ENCODE measurements at regions of chr7 and their contacts with region 1.

Region 1: DNA sequence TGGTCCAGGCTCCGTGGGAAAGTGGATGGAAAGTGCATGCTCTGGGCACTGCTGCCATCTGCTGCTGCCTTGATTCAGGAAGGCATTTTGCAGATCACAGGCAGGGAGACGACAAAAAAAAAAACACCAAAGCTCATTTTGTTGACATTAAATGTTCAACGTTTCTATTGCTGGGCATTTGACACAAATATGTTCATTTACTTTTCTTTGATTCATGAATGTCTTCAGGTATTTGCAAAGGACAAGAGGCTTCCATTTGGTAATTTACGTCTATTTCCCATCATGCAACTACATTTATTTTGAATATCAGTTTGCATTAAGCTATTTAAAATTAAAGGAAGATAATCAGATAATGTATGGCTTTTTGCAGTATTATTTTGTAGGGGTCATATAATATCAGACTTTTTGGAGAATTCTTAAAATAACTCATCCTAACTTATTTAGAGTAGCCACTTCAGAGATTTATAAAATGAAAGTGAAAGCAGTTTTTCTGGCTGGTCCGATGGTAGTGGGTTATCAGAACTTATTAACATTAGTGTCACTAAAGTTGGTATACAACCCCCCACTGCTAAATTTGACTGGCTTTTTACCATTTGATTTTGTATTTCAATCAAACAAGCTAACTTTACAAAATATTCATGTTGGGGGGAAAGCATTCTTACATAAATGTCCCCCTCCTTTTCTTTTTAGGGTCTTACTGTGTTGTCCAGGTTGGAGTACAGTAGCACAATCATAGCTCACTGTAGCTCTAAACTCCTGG is 65.3 kb downstream of the PDIA4 start:
- DNase-seq: peak; percentile 72
- ATAC-seq: peak; percentile 88

Region 2: GRCh38 chr7:148503875-148504487 is 459.0 kb before region 1 on chr7:
- intact Hi-C with region 1: loop called (anchors 5 kb)
- DNase-seq: no peak
- ATAC-seq: no peak

Region 3: DNA sequence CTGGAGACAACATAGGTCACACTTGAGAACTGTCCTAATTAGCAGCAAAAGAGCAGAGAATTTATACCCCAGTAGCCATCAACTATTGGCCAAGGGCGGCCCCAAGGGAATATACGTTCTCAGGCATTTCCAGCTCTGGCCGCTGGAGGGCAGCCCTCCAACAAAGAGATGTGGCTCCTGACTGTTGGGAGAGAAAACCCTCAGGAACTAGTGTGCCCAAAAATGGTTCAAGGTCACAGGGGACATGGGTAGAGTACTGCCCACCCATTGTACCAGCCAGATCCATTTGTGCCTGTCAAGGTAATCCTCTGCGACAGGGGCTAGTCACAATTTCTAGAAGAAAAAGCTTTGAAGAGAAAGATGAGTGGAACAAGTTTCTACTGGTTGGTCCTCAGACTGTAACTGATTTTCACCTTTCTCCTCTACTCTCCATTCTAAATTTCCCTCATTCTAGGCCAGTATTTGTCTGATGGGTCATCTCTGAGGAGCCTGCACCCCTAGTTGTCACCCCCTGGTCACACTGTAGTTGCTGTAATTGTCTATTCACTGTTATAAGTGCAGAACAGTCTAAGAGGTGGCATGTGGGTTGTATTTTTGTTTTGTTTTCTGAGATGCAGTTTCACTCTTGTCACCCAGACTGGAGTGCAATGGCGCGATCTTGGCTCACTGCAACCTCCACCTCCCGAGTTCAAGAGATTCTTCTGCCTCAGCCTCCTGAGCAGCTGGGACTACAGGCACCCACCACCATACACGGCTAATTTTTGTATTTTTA is 387.2 kb before region 1 on chr7:
- intact Hi-C with region 1: loop called (anchors 10 kb)
- DNase-seq: peak; percentile 80
- ATAC-seq: peak; percentile 78

Region 4: DNA sequence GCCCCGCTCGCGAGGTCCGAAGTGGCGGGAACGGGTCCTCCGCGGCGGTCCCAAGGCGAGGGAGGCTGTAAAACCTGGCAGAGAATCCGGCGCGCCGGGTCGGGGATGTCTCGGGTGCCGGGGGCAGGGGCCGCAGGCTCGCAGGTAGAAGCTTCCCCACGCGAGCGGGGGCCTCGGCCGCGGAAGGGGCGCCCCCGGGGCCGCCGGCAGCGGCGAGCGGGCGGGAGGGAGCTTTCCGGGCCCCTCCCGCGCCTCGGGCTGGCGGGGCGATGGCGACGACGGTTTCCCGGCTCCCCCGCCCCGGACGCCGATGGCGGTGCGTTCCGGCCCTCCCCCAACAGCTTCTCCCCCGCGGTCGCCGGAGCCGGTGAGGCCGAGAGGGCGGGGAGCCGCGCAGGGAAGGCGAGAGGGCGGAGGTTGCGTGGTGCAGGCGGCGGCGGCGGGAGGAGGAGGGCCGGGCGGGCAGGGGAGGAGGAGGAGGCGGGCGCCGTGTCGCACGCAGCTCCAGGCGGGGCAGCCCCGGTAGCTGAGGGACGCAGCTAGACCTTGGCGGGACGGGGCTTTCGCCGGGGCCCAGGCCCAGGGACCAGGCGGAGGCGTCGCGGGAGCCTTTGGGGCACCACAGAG is 264.5 kb before region 1 on chr7 and contains the start of gene CUL1:
- intact Hi-C with region 1: loop called (anchors 10 kb)
- DNase-seq: peak; percentile 93
- ATAC-seq: peak; percentile 92
- total RNA-seq, gene CUL1: 46.6 TPM

Region 5: GRCh38 chr7:148884299-148885022 is 78.5 kb before region 1 on chr7:
- intact Hi-C with region 1: loop called (anchors 10 kb)
- DNase-seq: peak; percentile 95
- ATAC-seq: peak; percentile 100

Region 6: DNA sequence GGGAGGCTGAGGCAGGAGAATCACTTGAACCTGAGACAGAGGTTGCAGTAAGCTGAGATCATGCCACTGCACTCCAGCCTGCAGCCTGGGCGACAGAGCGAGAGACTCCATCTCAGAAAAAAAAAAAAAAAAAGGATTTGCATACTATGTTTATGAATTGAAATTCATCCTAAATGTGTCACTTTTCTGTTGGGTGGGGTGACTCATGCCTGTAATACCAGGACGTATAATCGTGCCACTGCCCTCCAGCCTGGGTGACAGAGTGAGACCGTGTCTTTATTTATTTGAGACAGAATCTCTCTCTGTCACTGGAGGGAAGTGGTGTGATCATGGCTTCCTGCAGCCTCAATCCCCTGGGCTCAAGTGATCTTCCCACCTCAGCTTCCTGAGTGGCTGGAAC is 282.2 kb after region 1 on chr7:
- intact Hi-C with region 1: no loop called
- DNase-seq: no peak
- ATAC-seq: no peak